Left colon (tissue), 2 donors: ENCODE measurements at regions of chr15 and their contacts with region 1.

Region 1: DNA sequence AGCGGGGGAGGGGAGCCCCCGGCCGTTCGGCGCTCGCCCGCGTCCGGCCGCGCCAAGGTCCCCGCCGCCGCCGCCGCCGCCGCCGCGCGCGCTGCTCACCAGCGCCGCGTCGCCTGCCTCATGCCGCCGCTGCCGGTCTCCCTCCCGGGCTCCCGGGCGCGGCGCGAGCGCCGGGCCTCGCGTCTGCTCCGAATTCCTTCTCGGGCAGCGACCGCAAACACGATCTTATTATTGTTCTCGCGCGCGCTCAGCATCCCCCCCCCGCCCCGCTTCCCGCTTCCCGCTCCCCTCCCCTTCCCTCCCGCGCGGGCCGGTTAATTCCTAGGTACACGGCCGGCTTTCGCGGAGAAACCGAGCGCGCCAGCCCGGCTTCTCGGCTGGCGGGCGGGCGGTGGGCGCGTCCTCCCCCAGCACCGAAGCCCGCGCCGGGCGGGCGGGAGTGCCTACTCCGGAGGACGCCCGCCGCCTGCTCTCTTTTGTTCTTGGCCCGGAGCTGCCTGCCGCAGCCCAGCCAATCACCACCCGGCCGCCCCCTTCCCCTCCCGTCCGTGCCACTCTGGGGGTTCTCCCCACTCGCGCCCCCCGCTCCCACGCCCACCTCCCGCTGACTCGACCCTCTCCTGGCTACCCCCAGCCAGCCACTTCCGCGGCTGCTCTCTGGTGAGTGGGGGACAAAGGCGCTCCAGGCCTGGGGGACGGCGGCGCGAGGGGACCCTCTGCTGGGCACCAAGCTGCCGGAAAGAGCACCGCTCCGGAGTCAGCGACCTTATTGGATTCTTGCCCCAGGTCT is at the start of gene HDGFL3:
- DNase-seq: peak; percentile 35 to 57
- ATAC-seq: peak; percentile 58
- total RNA-seq, gene HDGFL3: 9.2 to 13.6 TPM

Region 2: GRCh38 chr15:82999905-83000671 is 207.7 kb before region 1 on chr15:
- intact Hi-C with region 1: loop called in 1 of 2 experiments (anchors 10 kb)
- DNase-seq: no peak
- ATAC-seq: peak; percentile 77

Region 3: GRCh38 chr15:83053151-83053550 is 154.7 kb before region 1 on chr15:
- intact Hi-C with region 1: no loop called
- DNase-seq: no peak
- ATAC-seq: peak; percentile 97